Lower leg skin (tissue), 4 donors: ENCODE measurements at regions of chr4 and their contacts with region 1.

Region 1: DNA sequence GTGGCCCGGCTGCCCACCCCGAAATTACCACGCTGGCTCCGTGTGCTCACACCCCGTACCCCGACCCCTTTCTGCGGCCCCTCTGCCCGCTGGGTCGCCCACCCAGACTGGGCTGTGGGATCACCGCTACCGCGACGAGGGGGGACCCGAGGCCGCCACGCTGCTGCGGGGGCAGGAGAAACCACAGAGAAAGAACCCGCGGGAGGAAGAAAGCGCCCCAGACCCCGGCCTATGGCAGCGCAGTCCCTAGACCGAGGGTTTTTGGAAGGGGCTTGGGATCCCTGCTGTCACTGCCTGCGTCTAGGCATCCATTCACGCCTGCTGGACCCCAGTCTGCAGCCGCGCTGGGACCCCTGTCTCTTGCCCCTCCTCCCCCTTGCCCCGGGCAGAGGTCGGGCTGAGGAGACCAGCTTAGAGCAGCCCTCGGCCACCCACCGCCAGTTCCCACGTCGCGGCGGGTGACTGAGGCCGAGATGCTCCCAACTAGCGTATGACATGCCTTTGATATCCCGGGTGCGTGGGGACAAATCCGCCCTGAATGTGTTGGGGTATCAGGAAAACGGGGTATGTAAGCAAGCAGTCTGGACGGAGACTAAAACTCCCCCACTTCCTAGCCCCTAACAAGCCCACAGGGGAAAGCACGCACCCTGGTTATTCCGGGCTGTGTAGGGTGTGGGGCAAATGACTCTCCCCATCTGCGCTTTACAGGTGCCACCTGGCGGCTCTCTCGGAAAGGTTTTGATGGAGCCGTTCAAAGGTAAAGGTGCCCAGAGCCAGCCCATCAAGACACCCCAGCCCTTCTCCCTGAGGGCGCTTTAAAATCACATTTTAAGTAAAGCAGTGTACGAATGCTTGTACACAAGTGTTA is 862 bp upstream of the INPP4B start:
- DNase-seq: peak in 1 of 2 donors; percentile 29
- H3K4me3 ChIP-seq: peak overlapping the region; percentile 32
- CTCF ChIP-seq: no peak
- POLR2A ChIP-seq: no peak

Region 2: GRCh38 chr4:142126890-142127497 is 720.0 kb before region 1 on chr4:
- intact Hi-C with region 1: loop called (anchors 5 kb)
- DNase-seq: peak in 1 of 2 donors; percentile 60
- H3K4me3 ChIP-seq: no peak overlapping the region
- CTCF ChIP-seq: no peak
- POLR2A ChIP-seq: no peak

Region 3: GRCh38 chr4:142353149-142353738 is 493.7 kb before region 1 on chr4:
- intact Hi-C with region 1: loop called (anchors 10 kb)
- DNase-seq: no peak
- H3K4me3 ChIP-seq: no peak overlapping the region
- CTCF ChIP-seq: no peak
- POLR2A ChIP-seq: no peak